ENCODE measurements at regions of chr17 and their contacts with region 1.

Region 1: GRCh38 chr17:35312790-35313711 is 60.4 kb downstream of the SLFN11 start:
- DNase-seq: peak; percentile 78
- H3K4me3 Mint-ChIP-seq: peak overlapping the region; percentile 77
- H3K27ac Mint-ChIP-seq: peak overlapping the region; percentile 85
- H3K4me1 Mint-ChIP-seq: peaks cover 27% of the 10 kb centered on the region
- H3K27me3 Mint-ChIP-seq: no peaks in the 10 kb centered on the region

Region 2: DNA sequence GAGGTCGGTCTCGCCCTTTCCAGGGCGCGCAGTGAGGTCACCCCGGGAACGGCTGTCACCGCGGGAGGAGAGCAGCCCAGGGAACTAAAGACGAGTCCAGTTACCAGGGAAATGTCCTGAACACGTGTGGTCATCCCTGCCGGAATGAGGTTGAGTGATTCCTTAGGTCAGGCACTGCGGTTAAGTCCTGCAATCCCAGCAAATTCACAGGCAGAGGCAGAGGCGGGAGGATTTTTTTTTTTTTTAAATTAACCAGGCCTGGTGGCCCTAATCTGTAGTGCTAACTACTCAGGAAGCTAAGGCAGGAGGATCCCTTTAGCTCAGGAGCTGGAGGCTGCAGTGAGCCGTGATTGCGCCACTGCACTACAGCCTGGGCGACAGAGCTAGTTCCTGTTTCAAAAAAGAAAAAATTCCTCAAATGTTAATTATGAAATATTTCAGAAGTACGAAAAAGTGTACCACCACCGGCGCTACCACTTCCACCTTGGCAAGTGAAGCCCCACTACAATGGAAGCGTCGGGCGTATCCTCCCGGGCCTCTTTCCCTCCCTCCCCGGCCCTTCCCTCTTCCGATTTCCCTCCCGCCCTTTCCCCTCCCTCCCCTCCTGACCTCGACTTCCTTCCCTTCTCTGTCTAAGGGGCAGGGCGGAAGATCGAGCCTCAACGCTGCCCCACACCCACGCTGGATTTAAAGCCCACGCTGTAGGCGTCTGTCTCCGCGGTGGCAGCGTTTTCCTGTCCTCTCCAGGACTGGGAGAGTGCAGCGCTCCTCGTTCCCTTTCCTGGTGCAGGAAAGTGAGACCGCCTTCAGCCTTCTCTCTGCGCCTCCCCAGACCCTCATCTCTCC is 33.1 kb after region 1 on chr17:
- CTCF ChIA-PET with region 1: interaction called, 8 read pairs
- intact Hi-C with region 1: loop called (anchors 2 kb)
- DNase-seq: peak; percentile 42
- H3K4me3 Mint-ChIP-seq: peak overlapping the region; percentile 76
- H3K27ac Mint-ChIP-seq: peak overlapping the region; percentile 19
- H3K4me1 Mint-ChIP-seq: peaks cover 23% of the 10 kb centered on the region
- H3K27me3 Mint-ChIP-seq: no peaks in the 10 kb centered on the region

Region 3: DNA sequence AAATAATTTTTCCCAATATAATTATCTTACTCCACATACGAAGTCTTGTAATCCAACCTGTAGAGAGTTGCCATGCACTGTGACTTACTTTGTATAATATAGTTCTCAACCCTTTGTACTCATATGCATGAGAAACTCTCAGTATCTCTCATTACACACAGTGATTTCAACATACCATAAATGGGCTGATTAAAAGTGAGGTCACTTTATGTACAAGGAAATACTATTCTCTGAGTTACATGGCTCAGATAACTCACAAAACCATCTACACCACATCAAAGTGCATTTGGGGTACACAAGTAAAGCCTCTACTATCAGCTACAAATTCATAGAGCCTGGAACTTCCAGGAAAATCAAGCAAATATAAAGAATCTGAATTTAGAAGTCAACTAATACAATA is 91.3 kb after region 1 on chr17:
- CTCF ChIA-PET with region 1: no interaction called
- intact Hi-C with region 1: no loop called
- DNase-seq: no peak
- H3K4me3 Mint-ChIP-seq: no peak overlapping the region
- H3K27ac Mint-ChIP-seq: no peak overlapping the region
- H3K4me1 Mint-ChIP-seq: peaks cover 2% of the 10 kb centered on the region
- H3K27me3 Mint-ChIP-seq: no peaks in the 10 kb centered on the region

Region 4: GRCh38 chr17:35416659-35417058 is 103.6 kb after region 1 on chr17:
- CTCF ChIA-PET with region 1: no interaction called
- intact Hi-C with region 1: no loop called
- DNase-seq: no peak
- H3K4me3 Mint-ChIP-seq: no peak overlapping the region
- H3K27ac Mint-ChIP-seq: no peak overlapping the region
- H3K4me1 Mint-ChIP-seq: peaks cover 2% of the 10 kb centered on the region
- H3K27me3 Mint-ChIP-seq: no peaks in the 10 kb centered on the region

Region 5: GRCh38 chr17:35432176-35433074 is 119.4 kb after region 1 on chr17 and contains the start of gene SLFN12:
- CTCF ChIA-PET with region 1: interaction called, 4 read pairs
- intact Hi-C with region 1: loop called (anchors 1 kb)
- DNase-seq: peak; percentile 66
- H3K4me3 Mint-ChIP-seq: peak within 1 kb of the TSS; percentile 87
- H3K27ac Mint-ChIP-seq: peak within 1 kb of the TSS; percentile 88
- H3K4me1 Mint-ChIP-seq: peaks cover 41% of the 10 kb centered on the region
- H3K27me3 Mint-ChIP-seq: no peaks in the 10 kb centered on the region
- total RNA-seq, gene SLFN12: 5.3 to 5.6 TPM

Region 6: DNA sequence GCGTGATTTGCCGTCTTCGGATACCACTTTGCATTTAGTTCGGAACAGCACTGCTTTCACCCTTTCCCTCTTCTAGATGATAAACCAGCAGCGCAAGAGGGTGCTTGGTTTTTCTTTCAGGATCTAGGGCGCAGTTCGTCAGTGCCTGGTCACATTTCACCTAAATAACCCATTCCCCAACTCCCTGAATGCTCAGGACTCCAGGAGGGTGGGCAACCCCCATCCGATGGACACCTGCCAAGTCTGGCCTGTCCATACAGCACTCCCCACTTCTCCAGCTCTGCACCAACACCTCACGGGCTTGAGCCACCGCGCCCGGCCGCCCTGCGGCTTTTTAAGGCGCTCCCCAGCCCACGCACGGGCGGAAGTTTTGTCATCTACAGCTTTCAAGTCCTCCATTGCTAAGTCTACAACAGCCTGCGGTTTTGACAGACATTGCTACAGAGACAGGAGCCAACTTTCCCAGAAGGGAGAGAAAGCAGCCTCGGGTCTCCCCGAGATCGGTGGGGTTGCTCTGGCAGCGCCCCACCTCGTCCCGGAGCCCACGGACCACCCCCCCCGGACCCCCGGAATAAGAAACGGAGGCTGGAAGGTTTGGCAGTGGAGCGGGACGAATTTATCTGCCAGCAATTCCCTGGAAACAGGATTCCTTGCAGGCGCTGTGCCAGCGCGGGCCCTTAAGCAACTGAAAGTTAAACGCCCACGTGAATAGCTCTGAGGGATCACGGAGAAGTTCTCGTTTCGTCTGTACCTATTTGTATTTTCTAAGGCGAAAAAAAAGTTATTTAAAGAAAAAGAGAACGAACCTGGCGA is 174.1 kb after region 1 on chr17:
- CTCF ChIA-PET with region 1: no interaction called
- intact Hi-C with region 1: loop called (anchors 2 kb)
- DNase-seq: peak; percentile 90
- H3K4me3 Mint-ChIP-seq: peak overlapping the region; percentile 82
- H3K27ac Mint-ChIP-seq: peak overlapping the region; percentile 83
- H3K4me1 Mint-ChIP-seq: peaks cover 27% of the 10 kb centered on the region
- H3K27me3 Mint-ChIP-seq: no peaks in the 10 kb centered on the region

Region 7: GRCh38 chr17:35543856-35544255 is 230.8 kb after region 1 on chr17:
- CTCF ChIA-PET with region 1: interaction called, 118 read pairs
- intact Hi-C with region 1: loop called (anchors 1 kb)
- DNase-seq: no peak
- H3K4me3 Mint-ChIP-seq: no peak overlapping the region
- H3K27ac Mint-ChIP-seq: no peak overlapping the region
- H3K4me1 Mint-ChIP-seq: peaks cover 45% of the 10 kb centered on the region
- H3K27me3 Mint-ChIP-seq: no peaks in the 10 kb centered on the region

Region 8: DNA sequence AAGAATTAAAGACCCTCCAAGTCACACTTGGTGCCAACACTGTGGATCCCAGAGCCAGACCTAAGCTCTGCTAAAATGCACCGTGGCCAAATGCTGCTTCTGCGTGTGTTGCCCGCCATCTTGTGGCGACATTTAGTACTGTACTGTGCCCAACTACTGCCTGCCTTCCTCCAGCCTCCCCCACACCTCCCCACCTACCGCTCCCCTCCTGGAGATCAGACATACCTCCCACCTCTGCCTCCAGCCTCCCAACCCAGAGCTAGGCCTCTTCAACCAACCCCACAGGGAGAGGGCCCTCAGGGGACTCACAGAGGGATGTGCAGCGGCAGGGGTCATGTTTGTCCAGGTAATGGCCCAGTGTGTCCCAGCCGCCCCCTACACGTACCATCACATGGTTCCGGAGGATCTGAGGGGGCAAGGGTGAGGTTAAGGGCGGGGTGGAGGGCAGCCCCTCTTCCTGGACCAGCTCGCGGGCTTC is 434.5 kb after region 1 on chr17:
- CTCF ChIA-PET with region 1: interaction called, 6 read pairs
- intact Hi-C with region 1: loop called (anchors 2 kb)
- DNase-seq: peak; percentile 89
- H3K4me3 Mint-ChIP-seq: no peak overlapping the region
- H3K27ac Mint-ChIP-seq: no peak overlapping the region
- H3K4me1 Mint-ChIP-seq: peaks cover 15% of the 10 kb centered on the region
- H3K27me3 Mint-ChIP-seq: peaks cover 42% of the 10 kb centered on the region

Measured in activated naive CD4-positive, alpha-beta T cell treated with anti-CD3 and anti-CD28 coated beads for 36 hours (primary cell).